SK-N-SH (cell line): ENCODE measurements at regions of chr19 and their contacts with region 1.

Region 1: DNA sequence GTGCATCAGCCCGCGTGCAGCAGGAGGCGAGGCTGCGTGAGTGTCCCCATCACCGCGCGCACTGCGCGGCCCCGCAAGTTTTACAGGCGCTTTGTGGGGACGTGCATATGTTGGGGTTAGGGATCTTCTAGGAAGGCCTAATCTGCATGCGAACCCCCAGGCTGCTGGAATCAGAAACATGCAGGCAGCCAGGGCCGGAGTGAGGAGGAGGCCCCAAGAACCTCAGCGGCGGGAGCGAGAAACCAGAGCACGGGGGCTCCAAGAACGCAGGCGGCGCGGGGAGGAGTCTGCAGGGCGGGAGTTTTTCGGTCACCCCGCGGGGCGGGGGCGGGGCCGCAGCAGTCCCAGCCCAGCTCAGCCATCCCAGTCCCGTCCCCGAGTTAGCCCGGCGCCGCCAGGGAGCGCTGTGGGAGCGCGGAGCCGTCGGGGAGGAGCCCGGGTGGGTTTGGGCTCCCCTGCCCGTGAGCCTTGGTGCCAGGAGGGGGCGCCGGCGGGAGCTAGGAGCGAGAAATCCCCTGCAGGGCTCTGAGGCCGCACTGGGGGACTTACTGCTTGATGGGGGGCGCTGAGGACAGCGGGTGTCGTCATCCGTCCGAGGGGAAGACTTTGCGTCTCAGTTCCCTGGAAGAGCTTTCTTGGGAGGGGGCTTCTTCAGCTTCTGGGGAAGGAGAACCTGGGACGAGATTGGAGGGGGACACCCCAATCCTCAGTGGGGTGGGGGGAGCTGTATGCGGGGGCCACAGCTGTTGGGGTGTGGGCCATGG is 933 bp upstream of the NRTN start:
- DNase-seq: peak; percentile 99
- H3K4me3 ChIP-seq: peak overlapping the region; percentile 30 to 56; a peak in 3 of 4 replicates
- H3K27ac ChIP-seq: no peak overlapping the region
- H3K4me1 ChIP-seq: peaks cover 3 to 32% of the 10 kb centered on the region in 2 experiments; a peak in 1 of 4 replicates
- H3K27me3 ChIP-seq: peaks cover 6% of the 10 kb centered on the region; the same call in 1 of the 2 replicates
- CTCF ChIP-seq: peak; percentile 96
- EP300 ChIP-seq: peak in 1 of 2 experiments; percentile 5; a peak in 1 of 4 replicates
- RAD21 ChIP-seq: peak; percentile 81

Region 2: GRCh38 chr19:5775668-5776309 is 28.1 kb before region 1 on chr19:
- CTCF ChIA-PET with region 1: interaction called, 12 read pairs
- POLR2A ChIA-PET with region 1: no interaction called
- DNase-seq: no peak
- H3K4me3 ChIP-seq: no peak overlapping the region
- H3K27ac ChIP-seq: no peak overlapping the region
- H3K4me1 ChIP-seq: no peaks in the 10 kb centered on the region; a peak in 1 of 4 replicates
- H3K27me3 ChIP-seq: no peaks in the 10 kb centered on the region
- CTCF ChIP-seq: no peak
- EP300 ChIP-seq: no peak
- RAD21 ChIP-seq: no peak

Region 3: DNA sequence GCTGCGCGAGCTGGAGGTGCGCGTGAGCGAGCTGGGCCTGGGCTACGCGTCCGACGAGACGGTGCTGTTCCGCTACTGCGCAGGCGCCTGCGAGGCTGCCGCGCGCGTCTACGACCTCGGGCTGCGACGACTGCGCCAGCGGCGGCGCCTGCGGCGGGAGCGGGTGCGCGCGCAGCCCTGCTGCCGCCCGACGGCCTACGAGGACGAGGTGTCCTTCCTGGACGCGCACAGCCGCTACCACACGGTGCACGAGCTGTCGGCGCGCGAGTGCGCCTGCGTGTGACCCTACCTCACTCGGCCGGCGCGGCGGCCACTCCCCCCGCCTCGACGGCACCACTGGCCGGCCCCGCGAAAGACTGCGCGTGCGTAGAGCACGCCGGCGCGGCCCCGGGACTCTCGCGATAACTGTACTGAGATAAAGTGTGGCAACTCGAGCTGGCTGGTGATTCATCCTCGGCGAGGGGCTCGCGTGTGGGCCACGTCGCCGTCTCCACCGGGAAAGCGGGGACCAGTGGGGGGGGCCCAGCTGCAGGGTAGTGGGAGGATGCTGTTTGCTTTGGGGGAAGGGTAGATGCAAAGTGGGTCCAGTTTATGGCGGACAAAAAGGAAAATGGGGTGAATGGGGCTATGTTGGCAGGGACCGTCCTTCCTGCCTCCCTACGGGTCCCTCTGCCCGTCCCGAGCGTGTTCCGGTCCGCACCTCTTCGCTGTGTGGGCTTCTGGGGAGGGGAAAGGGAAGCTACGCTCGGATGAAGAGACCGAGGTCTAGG is 24.1 kb after region 1 on chr19:
- CTCF ChIA-PET with region 1: interaction called, 51 read pairs
- POLR2A ChIA-PET with region 1: interaction called, 15 read pairs
- DNase-seq: peak; percentile 100
- H3K4me3 ChIP-seq: peak overlapping the region; percentile 63 to 67
- H3K27ac ChIP-seq: peak overlapping the region; percentile 64 to 96
- H3K4me1 ChIP-seq: peaks cover 0 to 28% of the 10 kb centered on the region in 2 experiments; a peak in 1 of 4 replicates
- H3K27me3 ChIP-seq: no peaks in the 10 kb centered on the region
- CTCF ChIP-seq: no peak
- EP300 ChIP-seq: no peak
- RAD21 ChIP-seq: no peak

Region 4: GRCh38 chr19:5857203-5858081 is 53.5 kb after region 1 on chr19:
- CTCF ChIA-PET with region 1: no interaction called
- POLR2A ChIA-PET with region 1: no interaction called
- DNase-seq: no peak
- H3K4me3 ChIP-seq: no peak overlapping the region
- H3K27ac ChIP-seq: no peak overlapping the region
- H3K4me1 ChIP-seq: no peaks in the 10 kb centered on the region
- H3K27me3 ChIP-seq: peaks cover 18% of the 10 kb centered on the region
- CTCF ChIP-seq: no peak
- EP300 ChIP-seq: no peak
- RAD21 ChIP-seq: no peak

Region 5: DNA sequence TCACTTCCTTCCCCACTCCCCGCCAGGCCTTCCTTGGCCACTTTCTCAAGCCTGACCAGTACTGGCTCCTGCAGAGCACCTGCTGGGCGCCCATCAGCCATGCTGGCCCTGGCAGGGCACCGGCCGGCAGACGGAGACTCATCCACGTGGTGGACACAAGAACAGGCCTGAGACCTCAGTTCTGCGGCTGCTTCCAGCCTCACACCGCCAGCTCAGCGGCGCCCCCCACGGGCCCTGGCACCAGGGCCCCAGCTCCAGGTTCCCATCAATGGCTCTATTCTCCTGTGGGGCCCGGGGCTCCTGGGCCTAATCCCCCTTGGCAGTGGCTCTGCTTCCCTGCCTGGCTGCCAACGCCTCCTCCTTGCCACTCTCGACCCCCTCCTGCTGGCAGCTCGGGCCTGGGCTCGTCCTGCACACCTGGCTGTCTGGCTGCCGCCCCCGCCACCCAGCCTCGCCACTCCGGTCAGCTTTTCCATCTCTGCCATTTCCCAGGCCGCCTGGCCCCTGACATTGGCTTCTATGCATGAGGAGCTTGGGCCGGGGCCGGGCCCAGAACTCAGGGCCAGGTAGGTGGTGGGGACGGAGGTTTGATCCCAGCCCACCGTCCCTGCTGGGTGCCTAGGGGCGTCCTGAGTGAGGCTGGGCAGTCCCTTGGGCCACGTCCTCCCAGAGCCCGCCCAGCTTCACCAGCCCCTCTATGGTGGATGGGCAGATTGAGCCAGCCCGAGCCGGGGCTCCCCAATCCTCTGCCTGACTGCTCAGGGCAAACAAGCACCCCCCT is 93.4 kb after region 1 on chr19:
- CTCF ChIA-PET with region 1: interaction called, 73 read pairs
- POLR2A ChIA-PET with region 1: interaction called, 3 read pairs
- DNase-seq: no peak
- H3K4me3 ChIP-seq: no peak overlapping the region
- H3K27ac ChIP-seq: no peak overlapping the region; a peak in 1 of 4 replicates
- H3K4me1 ChIP-seq: peaks cover 2 to 34% of the 10 kb centered on the region in 2 experiments; a peak in 2 of 4 replicates
- H3K27me3 ChIP-seq: no peaks in the 10 kb centered on the region
- CTCF ChIP-seq: peak; percentile 18; the same call in 1 of the 2 replicates
- EP300 ChIP-seq: no peak
- RAD21 ChIP-seq: 0 out of 2 replicates have a peak, but pooled peaks have one; percentile 3

Region 6: DNA sequence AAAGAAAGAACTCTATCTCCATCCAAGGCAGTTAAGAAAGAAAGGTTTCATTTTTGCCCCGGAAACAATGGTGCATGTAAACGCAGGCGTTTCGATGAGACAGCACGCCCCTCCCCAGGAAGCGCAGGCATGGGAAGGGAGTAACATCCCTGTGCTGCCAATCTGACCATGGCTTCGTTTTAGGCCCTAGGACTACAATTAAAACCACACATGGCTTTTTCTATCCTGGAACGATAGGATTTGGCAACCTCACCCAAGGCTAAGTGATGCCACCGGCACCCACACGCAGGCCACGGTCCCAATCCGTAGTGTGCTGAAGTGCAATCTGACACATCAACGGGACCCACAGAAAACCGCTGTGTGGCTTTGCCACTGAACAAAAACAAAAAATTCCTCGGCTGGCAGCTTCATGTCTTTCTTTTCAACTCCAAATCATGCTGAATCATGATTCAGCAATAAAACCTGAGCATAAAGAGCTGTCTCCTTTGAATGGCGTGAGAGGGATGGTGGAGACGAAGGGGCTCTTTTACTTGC is 149.8 kb after region 1 on chr19:
- CTCF ChIA-PET with region 1: interaction called, 10 read pairs
- POLR2A ChIA-PET with region 1: no interaction called
- DNase-seq: no peak
- H3K4me3 ChIP-seq: no peak overlapping the region
- H3K27ac ChIP-seq: peak overlapping the region; percentile 53 to 96; a peak in 3 of 4 replicates
- H3K4me1 ChIP-seq: peaks cover 31 to 78% of the 10 kb centered on the region in 2 experiments
- H3K27me3 ChIP-seq: no peaks in the 10 kb centered on the region
- CTCF ChIP-seq: no peak
- EP300 ChIP-seq: no peak
- RAD21 ChIP-seq: no peak

Region 7: GRCh38 chr19:5977785-5978605 is 174.1 kb after region 1 on chr19 and contains the start of gene RANBP3:
- CTCF ChIA-PET with region 1: interaction called, 22 read pairs
- POLR2A ChIA-PET with region 1: no interaction called
- DNase-seq: peak; percentile 100
- H3K4me3 ChIP-seq: peak within 1 kb of the TSS; percentile 81 to 90
- H3K27ac ChIP-seq: peak within 1 kb of the TSS; percentile 70 to 83; a peak in 3 of 4 replicates
- H3K4me1 ChIP-seq: peaks cover 10 to 17% of the 10 kb centered on the region in 2 experiments; a peak in 3 of 4 replicates
- H3K27me3 ChIP-seq: no peaks in the 10 kb centered on the region
- CTCF ChIP-seq: no peak
- EP300 ChIP-seq: no peak; a peak in 1 of 4 replicates
- RAD21 ChIP-seq: no peak; the same call in 1 of the 2 replicates
- polyA plus RNA-seq, gene RANBP3: 71.8 and 84.0 TPM in 2 replicates

Region 8: DNA sequence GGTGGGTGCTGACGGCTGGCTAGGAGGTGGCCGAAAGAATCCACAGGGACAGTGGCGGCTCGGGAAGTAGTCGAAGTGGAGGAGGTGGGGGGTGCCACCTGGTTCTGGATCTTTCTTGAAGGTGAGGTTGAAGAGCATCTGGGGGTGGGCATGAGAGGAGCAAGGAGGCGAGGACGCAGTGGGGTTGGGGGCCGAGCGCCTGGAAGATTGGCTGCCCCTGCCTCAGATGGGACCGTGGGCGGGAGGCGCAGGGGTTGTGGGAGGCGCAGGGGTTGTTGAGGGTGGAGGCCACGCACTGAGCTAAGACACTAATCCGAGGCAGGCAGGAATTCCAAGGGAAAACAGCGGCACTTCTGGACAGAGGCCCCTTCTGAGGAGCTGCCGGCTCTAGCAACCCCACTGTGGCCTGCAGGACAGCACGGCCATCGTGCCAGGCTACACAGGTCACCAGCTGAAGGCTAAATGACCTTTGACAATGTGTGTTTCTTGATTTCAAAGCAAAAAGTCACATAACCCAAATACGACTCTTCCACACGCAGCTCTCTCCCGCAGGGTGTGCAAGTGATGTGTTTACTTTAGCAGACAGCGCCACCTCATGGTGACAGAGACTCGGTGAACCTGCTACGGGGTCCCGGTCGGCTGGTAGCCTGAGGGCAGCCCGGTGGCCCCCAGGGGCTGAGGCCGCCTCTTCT is 218.1 kb after region 1 on chr19:
- CTCF ChIA-PET with region 1: interaction called, 47 read pairs
- POLR2A ChIA-PET with region 1: no interaction called
- DNase-seq: peak; percentile 92
- H3K4me3 ChIP-seq: peak overlapping the region in 1 of 2 experiments; percentile 39; a peak in 1 of 4 replicates
- H3K27ac ChIP-seq: peak overlapping the region in 1 of 2 experiments; percentile 85; a peak in 1 of 4 replicates
- H3K4me1 ChIP-seq: peaks cover 6 to 10% of the 10 kb centered on the region in 2 experiments; a peak in 3 of 4 replicates
- H3K27me3 ChIP-seq: no peaks in the 10 kb centered on the region
- CTCF ChIP-seq: peak; percentile 74
- EP300 ChIP-seq: no peak
- RAD21 ChIP-seq: peak; percentile 94